ENCODE measurements at regions of chr5 and their contacts with region 1.

Region 1: DNA sequence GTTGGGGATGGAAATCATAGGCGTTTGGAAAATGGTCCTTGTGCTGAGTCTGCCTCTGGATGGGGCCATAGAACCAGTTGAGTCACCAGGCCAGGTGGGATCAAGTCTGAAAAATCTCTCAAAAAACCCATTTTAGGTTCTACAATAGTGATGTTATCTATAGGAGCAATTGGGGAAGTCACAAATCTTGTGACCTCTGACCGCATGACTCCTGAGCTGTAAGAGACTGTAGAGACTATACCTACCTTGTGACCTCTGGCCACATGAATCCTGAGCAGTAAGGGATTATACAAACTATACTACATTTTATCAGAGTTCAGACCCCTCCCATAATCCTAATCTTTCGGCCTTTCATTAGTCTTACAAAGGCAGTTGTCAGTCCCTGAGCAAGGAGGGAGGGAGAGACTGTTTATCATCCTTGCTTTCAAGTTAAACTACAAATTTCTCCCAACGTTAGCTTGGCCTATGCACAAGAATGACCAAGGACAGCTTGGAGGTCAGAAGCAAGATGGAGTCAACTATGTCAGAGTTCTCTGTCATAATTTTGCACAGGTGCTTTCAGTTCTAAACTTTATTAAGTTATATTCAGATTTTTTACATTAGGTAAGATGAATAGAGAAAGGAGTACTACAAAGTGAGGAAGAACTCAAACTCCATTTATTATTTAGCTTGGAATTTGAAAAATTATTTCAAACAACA is 11.5 kb upstream of the JMY start:
- DNase-seq: no peak
- H3K4me3 ChIP-seq: no peak overlapping the region
- H3K27ac ChIP-seq: no peak overlapping the region
- H3K4me1 ChIP-seq: no peaks in the 10 kb centered on the region
- H3K27me3 ChIP-seq: no peaks in the 10 kb centered on the region
- CTCF ChIP-seq: no peak

Region 2: GRCh38 chr5:79305706-79306105 is 81.3 kb after region 1 on chr5:
- CTCF ChIA-PET with region 1: no interaction called
- POLR2A ChIA-PET with region 1: interaction called, 13 read pairs
- intact Hi-C with region 1: no loop called
- DNase-seq: no peak
- H3K4me3 ChIP-seq: no peak overlapping the region
- H3K27ac ChIP-seq: no peak overlapping the region
- H3K4me1 ChIP-seq: peaks cover 14% of the 10 kb centered on the region
- H3K27me3 ChIP-seq: no peaks in the 10 kb centered on the region
- CTCF ChIP-seq: no peak

Measured in PC-9 (cell line).